ENCODE measurements at regions of chr7 and their contacts with region 1.

Region 1: GRCh38 chr7:20598459-20599309 is 16.8 kb upstream of the ABCB5 start:
- DNase-seq: peak; percentile 70
- ATAC-seq: peak; percentile 63
- H3K4me3 ChIP-seq: no peak overlapping the region
- H3K4me3 Mint-ChIP-seq: no peak overlapping the region
- H3K27ac ChIP-seq: no peak overlapping the region
- H3K27ac Mint-ChIP-seq: no peak overlapping the region
- H3K4me1 ChIP-seq: peaks cover 3% of the 10 kb centered on the region in 2 donors
- H3K4me1 Mint-ChIP-seq: peaks cover 2% of the 10 kb centered on the region
- H3K27me3 ChIP-seq: peaks cover 0 to 11% (median 7%) of the 10 kb centered on the region in 4 experiments
- H3K27me3 Mint-ChIP-seq: peaks cover 19% of the 10 kb centered on the region
- CTCF ChIP-seq: peak; percentile 89

Region 2: DNA sequence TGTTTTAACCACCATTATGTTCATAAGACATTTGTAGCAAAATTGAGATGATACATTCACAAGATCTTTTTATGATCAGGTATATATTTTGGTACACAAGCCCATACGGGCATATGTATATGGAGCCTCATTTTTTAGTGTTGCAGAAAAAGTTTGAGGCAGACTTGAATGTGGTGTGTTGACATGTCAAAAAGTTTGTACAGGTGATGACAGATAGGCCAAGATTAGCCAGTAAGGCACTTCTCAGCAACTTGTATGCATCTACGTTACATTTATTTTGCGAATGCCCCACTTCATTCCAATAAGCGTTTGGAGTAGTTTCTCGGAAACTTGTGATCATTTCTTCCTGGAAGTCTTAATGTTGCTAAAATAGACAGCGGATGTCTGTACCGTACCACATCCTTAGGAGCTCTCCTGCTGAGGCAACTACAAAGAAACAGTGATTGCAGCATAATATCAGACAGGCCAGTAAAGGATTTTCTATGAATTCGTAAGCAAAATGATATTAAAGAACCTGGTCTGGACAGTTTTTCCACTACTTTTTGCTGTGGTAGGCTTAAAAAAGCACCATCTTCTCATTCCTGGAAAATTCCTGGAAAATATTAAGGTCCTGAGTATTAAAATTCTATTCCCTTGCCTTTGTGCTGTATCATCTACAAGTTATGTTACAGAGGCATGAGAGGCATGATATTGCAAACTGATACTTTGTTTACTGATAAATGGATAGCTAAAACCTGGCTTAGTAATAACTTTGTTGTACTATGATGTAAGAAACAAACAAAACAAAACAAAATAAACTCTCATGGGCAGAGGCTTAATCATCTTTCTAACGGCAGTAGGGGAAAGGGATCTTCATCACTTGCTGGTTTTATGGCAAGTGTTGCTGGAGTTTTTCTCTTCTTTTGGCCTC is 1949.6 kb before region 1 on chr7:
- CTCF ChIA-PET with region 1: no interaction called
- POLR2A ChIA-PET with region 1: no interaction called
- intact Hi-C with region 1: loop called (anchors 10 kb)
- DNase-seq: no peak
- ATAC-seq: no peak
- H3K4me3 ChIP-seq: no peak overlapping the region
- H3K4me3 Mint-ChIP-seq: no peak overlapping the region
- H3K27ac ChIP-seq: no peak overlapping the region
- H3K27ac Mint-ChIP-seq: no peak overlapping the region
- H3K4me1 ChIP-seq: no peaks in the 10 kb centered on the region
- H3K4me1 Mint-ChIP-seq: no peaks in the 10 kb centered on the region
- H3K27me3 ChIP-seq: no peaks in the 10 kb centered on the region
- H3K27me3 Mint-ChIP-seq: no peaks in the 10 kb centered on the region
- CTCF ChIP-seq: no peak

Region 3: DNA sequence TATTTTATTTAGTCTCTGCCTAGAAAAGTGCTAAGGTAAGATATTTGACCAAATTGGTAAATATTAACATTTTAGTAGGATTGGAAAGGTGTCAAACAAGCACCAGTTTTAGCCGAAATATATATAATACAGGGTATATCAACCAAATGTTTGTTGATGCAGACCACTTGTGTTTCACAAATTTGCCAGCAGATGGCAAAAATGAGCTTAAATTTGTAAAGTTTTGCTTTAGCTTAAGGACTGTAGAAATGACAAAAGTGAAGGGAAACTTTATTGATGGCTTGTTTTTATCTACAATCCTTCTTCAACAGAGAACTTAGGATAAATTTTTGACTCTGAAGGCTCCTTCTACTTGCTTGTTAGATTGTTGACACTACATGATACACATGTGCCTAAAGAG is 885.0 kb before region 1 on chr7:
- CTCF ChIA-PET with region 1: interaction called, 341 read pairs
- POLR2A ChIA-PET with region 1: no interaction called
- intact Hi-C with region 1: loop called (anchors 1 kb)
- DNase-seq: peak; percentile 69
- ATAC-seq: no peak
- H3K4me3 ChIP-seq: no peak overlapping the region
- H3K4me3 Mint-ChIP-seq: no peak overlapping the region
- H3K27ac ChIP-seq: no peak overlapping the region
- H3K27ac Mint-ChIP-seq: no peak overlapping the region
- H3K4me1 ChIP-seq: peaks cover 6 to 7% of the 10 kb centered on the region in 2 donors
- H3K4me1 Mint-ChIP-seq: peaks cover 14% of the 10 kb centered on the region
- H3K27me3 ChIP-seq: no peaks in the 10 kb centered on the region
- H3K27me3 Mint-ChIP-seq: peaks cover 15% of the 10 kb centered on the region
- CTCF ChIP-seq: peak; percentile 79

Region 4: GRCh38 chr7:19754521-19755116 is 844.1 kb before region 1 on chr7:
- CTCF ChIA-PET with region 1: interaction called, 39 read pairs
- POLR2A ChIA-PET with region 1: no interaction called
- intact Hi-C with region 1: loop called (anchors 1 kb)
- DNase-seq: peak; percentile 58
- ATAC-seq: no peak
- H3K4me3 ChIP-seq: no peak overlapping the region
- H3K4me3 Mint-ChIP-seq: no peak overlapping the region
- H3K27ac ChIP-seq: no peak overlapping the region
- H3K27ac Mint-ChIP-seq: no peak overlapping the region
- H3K4me1 ChIP-seq: no peaks in the 10 kb centered on the region
- H3K4me1 Mint-ChIP-seq: no peaks in the 10 kb centered on the region
- H3K27me3 ChIP-seq: no peaks in the 10 kb centered on the region
- H3K27me3 Mint-ChIP-seq: peaks cover 6% of the 10 kb centered on the region
- CTCF ChIP-seq: peak; percentile 94

Region 5: GRCh38 chr7:20158684-20159083 is 440.0 kb before region 1 on chr7:
- CTCF ChIA-PET with region 1: interaction called, 9 read pairs
- POLR2A ChIA-PET with region 1: no interaction called
- intact Hi-C with region 1: loop called (anchors 2 kb)
- DNase-seq: peak; percentile 42
- ATAC-seq: peak; percentile 28
- H3K4me3 ChIP-seq: no peak overlapping the region
- H3K4me3 Mint-ChIP-seq: no peak overlapping the region
- H3K27ac ChIP-seq: no peak overlapping the region
- H3K27ac Mint-ChIP-seq: no peak overlapping the region
- H3K4me1 ChIP-seq: no peaks in the 10 kb centered on the region
- H3K4me1 Mint-ChIP-seq: peaks cover 5% of the 10 kb centered on the region
- H3K27me3 ChIP-seq: no peaks in the 10 kb centered on the region
- H3K27me3 Mint-ChIP-seq: no peaks in the 10 kb centered on the region
- CTCF ChIP-seq: peak; percentile 29

Region 6: DNA sequence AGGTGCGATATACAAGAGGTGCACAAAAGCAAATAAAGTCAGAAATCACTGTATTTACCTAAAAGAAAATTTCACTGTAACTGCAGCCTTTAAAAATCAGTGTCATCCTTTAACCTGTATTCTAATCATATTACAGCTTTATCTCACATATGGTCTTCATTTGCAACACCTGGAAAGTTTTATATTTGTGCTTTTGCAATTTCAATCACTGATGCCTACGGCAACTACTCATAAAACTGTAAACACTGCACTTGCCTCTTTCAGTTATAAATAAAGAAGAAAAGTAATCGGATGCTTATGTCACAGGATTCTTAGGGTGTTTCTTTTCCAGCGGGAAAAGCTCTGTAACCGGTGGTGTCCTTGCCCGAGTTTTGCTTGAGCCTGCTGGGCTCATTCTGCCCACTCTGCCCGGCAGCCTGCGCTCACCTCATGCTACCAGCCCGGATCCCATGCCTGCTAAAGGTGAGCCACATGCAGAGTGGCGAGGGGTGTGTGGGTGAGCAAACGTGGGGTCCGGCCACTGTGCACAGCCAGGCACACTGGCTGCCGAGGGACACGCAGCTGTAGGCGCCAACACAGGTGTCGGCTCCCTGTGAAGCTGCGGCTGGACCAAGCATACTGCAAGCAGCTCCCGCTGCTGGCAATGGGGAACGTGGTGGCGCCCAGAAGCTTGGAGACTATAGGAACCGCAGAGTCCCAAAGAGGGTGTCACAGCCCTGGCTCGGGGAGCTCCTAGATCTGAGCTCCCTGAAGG is 39.5 kb before region 1 on chr7:
- CTCF ChIA-PET with region 1: no interaction called
- POLR2A ChIA-PET with region 1: no interaction called
- intact Hi-C with region 1: no loop called
- DNase-seq: no peak
- ATAC-seq: no peak
- H3K4me3 ChIP-seq: no peak overlapping the region
- H3K4me3 Mint-ChIP-seq: no peak overlapping the region
- H3K27ac ChIP-seq: no peak overlapping the region
- H3K27ac Mint-ChIP-seq: no peak overlapping the region
- H3K4me1 ChIP-seq: no peaks in the 10 kb centered on the region
- H3K4me1 Mint-ChIP-seq: no peaks in the 10 kb centered on the region
- H3K27me3 ChIP-seq: no peaks in the 10 kb centered on the region
- H3K27me3 Mint-ChIP-seq: peaks cover 6% of the 10 kb centered on the region
- CTCF ChIP-seq: no peak

Region 7: DNA sequence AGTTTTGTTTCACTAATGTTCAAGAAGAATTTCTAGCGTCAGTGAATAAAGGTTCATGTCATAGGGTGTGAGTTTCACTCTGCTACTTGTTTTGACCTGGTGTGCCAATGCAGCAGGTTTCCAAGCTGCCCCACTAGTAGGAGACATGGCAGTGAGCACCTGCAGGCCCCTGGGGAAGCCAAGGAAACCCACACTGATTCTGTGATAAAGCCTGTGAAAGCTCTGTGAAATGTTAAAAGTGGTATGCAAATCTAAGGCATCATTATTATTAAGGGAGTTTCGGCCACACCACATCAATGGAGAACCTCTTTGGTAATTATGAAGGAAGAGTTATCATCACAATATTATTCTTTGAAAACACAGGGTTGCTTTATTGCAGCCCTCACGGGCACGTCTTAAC is 63.2 kb after region 1 on chr7:
- CTCF ChIA-PET with region 1: no interaction called
- POLR2A ChIA-PET with region 1: no interaction called
- intact Hi-C with region 1: no loop called
- DNase-seq: no peak
- ATAC-seq: no peak
- H3K4me3 ChIP-seq: no peak overlapping the region
- H3K4me3 Mint-ChIP-seq: no peak overlapping the region
- H3K27ac ChIP-seq: no peak overlapping the region
- H3K27ac Mint-ChIP-seq: no peak overlapping the region
- H3K4me1 ChIP-seq: no peaks in the 10 kb centered on the region
- H3K4me1 Mint-ChIP-seq: no peaks in the 10 kb centered on the region
- H3K27me3 ChIP-seq: no peaks in the 10 kb centered on the region
- H3K27me3 Mint-ChIP-seq: peaks cover 9% of the 10 kb centered on the region
- CTCF ChIP-seq: no peak

Measured in B cell (primary cell).